Ascending aorta (tissue), 2 donors: ENCODE measurements at regions of chr10 and their contacts with region 1.

Region 1: DNA sequence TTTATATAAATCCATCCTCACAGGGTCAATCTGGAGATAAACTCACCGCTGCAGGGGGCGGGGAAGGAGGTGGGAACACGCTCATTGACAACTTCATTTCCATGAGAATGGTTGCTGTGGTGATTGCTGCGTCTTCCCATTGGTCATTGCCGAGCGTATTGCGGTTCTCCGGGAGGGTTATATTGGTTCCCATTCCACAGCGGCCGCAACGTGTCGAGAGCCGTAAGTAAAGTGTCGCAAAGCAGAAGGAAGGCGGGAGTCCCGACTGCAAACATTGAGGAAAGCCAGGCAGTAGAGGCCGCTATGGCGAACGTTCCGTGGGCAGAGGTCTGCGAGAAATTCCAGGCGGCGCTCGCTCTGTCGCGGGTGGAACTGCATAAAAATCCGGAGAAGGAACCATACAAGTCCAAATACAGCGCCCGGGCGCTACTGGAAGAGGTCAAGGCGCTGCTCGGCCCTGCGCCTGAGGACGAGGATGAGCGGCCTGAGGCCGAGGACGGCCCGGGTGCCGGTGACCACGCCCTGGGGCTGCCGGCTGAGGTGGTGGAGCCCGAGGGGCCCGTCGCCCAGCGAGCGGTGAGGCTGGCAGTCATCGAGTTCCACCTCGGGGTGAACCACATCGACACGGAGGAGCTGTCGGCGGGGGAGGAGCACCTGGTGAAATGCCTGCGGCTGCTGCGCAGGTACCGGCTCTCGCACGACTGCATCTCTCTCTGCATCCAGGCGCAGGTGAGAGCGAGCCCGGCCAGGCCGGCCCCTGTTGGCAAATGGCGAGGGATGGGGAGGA is at the start of gene KIFBP:
- DNase-seq: peak; percentile 89 to 98
- H3K4me3 ChIP-seq: peak within 1 kb of the TSS; percentile 71 to 85
- H3K27ac ChIP-seq: peak within 1 kb of the TSS; percentile 85 to 88
- H3K4me1 ChIP-seq: peaks cover 5 to 36% of the 10 kb centered on the region in 2 donors
- H3K27me3 ChIP-seq: no peaks in the 10 kb centered on the region
- CTCF ChIP-seq: peak; percentile 28 to 61 (median 56)
- total RNA-seq, gene KIFBP: 25.3 TPM

Region 2: DNA sequence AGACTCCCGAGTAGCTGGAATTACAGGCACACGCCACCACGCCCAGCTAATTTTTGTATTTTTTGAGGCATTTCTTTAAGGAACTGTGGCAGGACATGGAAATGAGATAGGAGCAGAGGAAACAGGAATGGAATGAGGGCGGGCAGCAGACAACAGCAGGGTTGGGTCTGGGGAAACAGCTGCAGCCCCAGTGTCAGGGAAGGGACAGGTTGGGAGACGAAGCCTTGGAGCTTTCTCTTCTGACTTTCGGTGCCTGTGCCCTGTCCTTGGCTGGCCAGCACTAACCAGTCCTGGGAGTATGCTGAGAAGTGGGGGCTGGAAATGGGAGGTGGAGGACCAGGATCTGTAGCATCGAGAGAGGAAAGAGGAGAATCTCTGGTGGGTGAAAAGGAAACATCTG is 804.2 kb before region 1 on chr10:
- intact Hi-C with region 1: no loop called
- DNase-seq: no peak
- H3K4me3 ChIP-seq: no peak overlapping the region
- H3K27ac ChIP-seq: no peak overlapping the region
- H3K4me1 ChIP-seq: no peaks in the 10 kb centered on the region
- H3K27me3 ChIP-seq: no peaks in the 10 kb centered on the region
- CTCF ChIP-seq: no peak

Region 3: DNA sequence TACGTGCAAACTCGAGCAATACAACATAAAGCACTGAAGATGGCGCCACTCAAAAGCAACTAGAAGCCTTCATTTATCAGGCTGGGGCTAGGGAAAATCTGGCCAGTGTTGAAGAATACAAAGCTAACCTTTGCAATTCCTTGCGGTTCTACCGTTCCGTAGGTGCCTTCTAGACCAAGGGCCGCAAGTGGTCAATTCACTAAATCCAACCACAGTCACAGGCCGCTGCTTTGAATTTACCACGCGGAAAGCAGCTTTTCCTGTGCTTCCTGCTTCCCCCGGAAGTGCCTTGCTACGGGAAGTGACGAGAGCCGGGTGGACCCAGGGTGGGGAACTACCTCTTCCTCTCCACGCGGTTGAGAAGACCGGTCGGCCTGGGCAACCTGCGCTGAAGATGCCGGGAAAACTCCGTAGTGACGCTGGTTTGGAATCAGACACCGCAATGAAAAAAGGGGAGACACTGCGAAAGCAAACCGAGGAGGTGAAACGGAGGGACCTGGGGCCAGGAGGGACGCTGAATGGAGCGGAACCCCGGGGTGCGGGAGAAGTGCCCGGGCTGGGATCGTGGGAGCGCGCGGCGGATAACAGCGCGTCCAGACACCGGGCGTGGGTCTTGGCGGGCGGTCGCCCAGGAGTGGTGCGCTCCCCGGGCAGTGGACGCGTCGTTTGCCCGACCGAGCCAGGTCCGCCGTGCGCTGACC is 32.7 kb before region 1 on chr10 and contains the start of gene DDX21:
- intact Hi-C with region 1: loop called (anchors 2 kb)
- DNase-seq: peak; percentile 51 to 95
- H3K4me3 ChIP-seq: peak within 1 kb of the TSS; percentile 84 to 88
- H3K27ac ChIP-seq: peak within 1 kb of the TSS; percentile 85 to 92
- H3K4me1 ChIP-seq: peaks cover 6 to 17% of the 10 kb centered on the region in 2 donors
- H3K27me3 ChIP-seq: no peaks in the 10 kb centered on the region
- CTCF ChIP-seq: peak; percentile 57 to 72 (median 62)
- total RNA-seq, gene DDX21: 26.5 TPM

Region 4: GRCh38 chr10:69061305-69062161 is 72.8 kb after region 1 on chr10:
- intact Hi-C with region 1: loop called (anchors 2 kb)
- DNase-seq: peak; percentile 53 to 86
- H3K4me3 ChIP-seq: peak overlapping the region; percentile 27 to 49
- H3K27ac ChIP-seq: peak overlapping the region; percentile 87 to 96
- H3K4me1 ChIP-seq: peaks cover 10 to 19% of the 10 kb centered on the region in 2 donors
- H3K27me3 ChIP-seq: no peaks in the 10 kb centered on the region
- CTCF ChIP-seq: no peak

Region 5: GRCh38 chr10:69092959-69093850 is 104.5 kb after region 1 on chr10:
- intact Hi-C with region 1: loop called (anchors 1 kb)
- DNase-seq: peak in 1 of 2 donors; percentile 93
- H3K4me3 ChIP-seq: peak overlapping the region in 1 of 2 donors; percentile 65
- H3K27ac ChIP-seq: peak overlapping the region in 1 of 2 donors; percentile 9
- H3K4me1 ChIP-seq: peaks cover 0 to 4% of the 10 kb centered on the region in 2 donors
- H3K27me3 ChIP-seq: no peaks in the 10 kb centered on the region
- CTCF ChIP-seq: peak; percentile 77 to 81 (median 81)